Psoas muscle (tissue), 8 donors: ENCODE measurements at regions of chr2 and their contacts with region 1.

Region 1: DNA sequence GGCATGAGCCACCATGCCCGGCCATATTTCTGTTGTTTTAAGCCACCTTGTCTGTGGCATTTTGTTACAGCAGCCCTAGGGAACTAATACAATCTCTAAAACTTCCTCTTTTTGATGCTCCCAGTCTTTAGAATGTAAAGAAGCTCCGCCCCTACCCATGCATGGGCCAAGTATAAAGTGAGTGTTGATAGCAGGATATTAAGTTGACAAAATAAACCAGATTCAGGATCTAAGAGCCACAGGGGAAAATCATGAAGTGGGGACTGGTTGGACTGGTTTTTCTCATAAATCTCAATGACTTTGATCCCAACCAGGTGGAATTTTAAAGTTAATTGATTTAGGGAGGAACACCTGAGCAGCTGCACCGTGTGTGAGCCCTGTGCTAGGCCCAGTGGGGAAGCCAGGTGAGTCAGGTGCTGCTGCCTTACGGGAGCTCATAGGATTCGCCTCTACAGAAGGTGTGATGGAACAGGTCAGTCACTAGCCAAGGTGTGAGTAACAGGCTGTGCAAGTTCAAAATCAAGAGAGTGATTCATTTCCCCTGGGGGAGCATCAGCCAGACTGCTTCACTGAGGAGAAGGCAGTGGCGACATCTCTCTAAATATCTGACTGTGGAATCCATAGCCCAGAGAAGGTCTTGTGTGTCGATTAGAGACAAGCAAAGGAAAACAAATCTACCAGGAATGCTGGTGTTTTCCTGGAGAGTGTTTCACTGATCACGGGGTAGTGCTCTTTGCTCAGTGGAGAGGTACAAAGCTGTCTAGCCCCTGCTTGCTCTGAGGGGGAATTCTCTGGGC is 63.0 kb upstream of the MSH2 start:
- DNase-seq: no peak
- ATAC-seq: peak in 1 of 4 donors; percentile 31
- H3K4me3 ChIP-seq: no peak overlapping the region
- H3K27ac ChIP-seq: no peak overlapping the region
- H3K4me1 ChIP-seq: peaks cover 5% of the 10 kb centered on the region
- H3K27me3 ChIP-seq: no peaks in the 10 kb centered on the region
- CTCF ChIP-seq: no peak

Region 2: DNA sequence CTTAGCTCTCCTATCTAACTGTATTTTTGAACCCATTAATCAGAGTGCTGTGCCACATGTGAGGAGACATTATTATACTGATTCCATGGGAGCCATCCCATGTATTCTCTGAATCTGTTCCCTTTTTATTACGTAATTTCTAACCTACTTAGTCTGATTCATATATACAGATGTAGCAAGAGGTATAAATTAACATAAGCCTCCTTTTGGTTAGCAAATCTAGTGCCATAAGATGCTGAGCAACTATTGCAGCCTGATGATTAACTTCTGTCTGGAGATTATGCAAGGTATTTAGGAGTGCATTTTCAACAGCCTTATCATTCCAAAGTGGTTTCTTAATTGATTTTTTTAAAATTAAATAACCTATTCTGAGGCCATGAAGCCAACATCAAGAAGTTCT is 51.1 kb before region 1 on chr2:
- intact Hi-C with region 1: no loop called
- DNase-seq: no peak
- ATAC-seq: peak in 2 of 4 donors; percentile 49 to 80
- H3K4me3 ChIP-seq: no peak overlapping the region
- H3K27ac ChIP-seq: no peak overlapping the region
- H3K4me1 ChIP-seq: peaks cover 9% of the 10 kb centered on the region
- H3K27me3 ChIP-seq: no peaks in the 10 kb centered on the region
- CTCF ChIP-seq: no peak

Region 3: DNA sequence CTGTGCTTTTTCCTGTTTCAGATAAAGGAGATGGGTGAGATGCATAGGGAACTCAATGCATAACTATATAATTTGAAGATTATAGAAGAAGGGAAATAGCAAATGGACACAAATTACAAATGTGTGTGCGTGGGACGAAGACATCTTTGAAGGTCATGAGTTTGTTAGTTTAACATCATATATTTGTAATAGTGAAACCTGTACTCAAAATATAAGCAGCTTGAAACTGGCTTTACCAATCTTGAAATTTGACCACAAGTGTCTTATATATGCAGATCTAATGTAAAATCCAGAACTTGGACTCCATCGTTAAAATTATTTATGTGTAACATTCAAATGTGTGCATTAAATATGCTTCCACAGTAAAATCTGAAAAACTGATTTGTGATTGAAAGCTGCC is 46.6 kb after region 1 on chr2:
- intact Hi-C with region 1: loop called (anchors 1 to 5 kb)
- DNase-seq: no peak
- ATAC-seq: no peak
- H3K4me3 ChIP-seq: no peak overlapping the region
- H3K27ac ChIP-seq: no peak overlapping the region
- H3K4me1 ChIP-seq: no peaks in the 10 kb centered on the region
- H3K27me3 ChIP-seq: no peaks in the 10 kb centered on the region
- CTCF ChIP-seq: no peak